ENCODE measurements at regions of chr19 and their contacts with region 1.

Region 1: GRCh38 chr19:14006243-14006765 is at the start of gene RFX1:
- DNase-seq: peak; percentile 100
- ATAC-seq: peak; percentile 84
- H3K4me3 Mint-ChIP-seq: peak within 1 kb of the TSS; percentile 94
- H3K27ac Mint-ChIP-seq: peak within 1 kb of the TSS; percentile 98
- H3K4me1 Mint-ChIP-seq: peaks cover 39% of the 10 kb centered on the region
- H3K27me3 Mint-ChIP-seq: no peaks in the 10 kb centered on the region
- total RNA-seq, gene RFX1: 14.2 to 15.3 TPM

Region 2: DNA sequence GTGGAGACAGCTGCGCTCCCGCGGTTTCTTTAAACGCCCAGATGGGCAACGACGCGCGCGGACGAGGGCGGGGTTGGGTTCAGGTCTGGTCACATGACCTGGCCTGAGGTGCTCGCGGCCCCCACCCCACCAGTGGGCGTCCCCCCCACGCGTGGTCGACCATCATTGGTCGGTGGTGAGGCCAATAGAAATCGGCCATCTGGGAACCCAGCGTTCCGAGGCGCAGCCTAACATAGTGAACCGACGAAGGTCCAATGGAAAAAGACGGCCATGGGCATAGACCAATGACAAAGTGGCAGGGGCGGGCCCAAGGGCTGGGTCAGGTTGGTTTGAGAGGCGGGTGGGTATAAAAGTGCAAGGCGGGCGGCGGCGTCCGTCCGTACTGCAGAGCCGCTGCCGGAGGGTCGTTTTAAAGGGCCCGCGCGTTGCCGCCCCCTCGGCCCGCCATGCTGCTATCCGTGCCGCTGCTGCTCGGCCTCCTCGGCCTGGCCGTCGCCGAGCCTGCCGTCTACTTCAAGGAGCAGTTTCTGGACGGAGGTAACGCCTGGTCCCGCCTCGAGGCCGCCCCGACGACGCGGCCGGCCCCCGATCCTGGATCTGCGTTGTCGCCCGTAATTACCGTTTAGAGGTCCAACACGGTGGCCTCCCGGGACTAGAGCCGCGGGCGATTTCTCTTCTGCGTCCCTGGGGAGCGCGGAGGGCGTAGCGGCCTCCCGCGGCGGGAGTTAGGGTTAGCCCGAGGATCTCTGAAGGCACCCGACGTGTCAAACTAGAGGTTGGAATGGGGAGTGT is 1067.9 kb before region 1 on chr19 and contains the start of gene CALR:
- CTCF ChIA-PET with region 1: no interaction called
- POLR2A ChIA-PET with region 1: interaction called, 8 read pairs
- intact Hi-C with region 1: loop called in 1 of 2 experiments (anchors 10 kb)
- DNase-seq: peak; percentile 99
- ATAC-seq: peak; percentile 89
- H3K4me3 Mint-ChIP-seq: peak within 1 kb of the TSS; percentile 99
- H3K27ac Mint-ChIP-seq: peak within 1 kb of the TSS; percentile 96
- H3K4me1 Mint-ChIP-seq: peaks cover 59% of the 10 kb centered on the region
- H3K27me3 Mint-ChIP-seq: no peaks in the 10 kb centered on the region
- total RNA-seq, gene CALR: 557 to 569 TPM

Region 3: GRCh38 chr19:13774217-13775191 is 231.8 kb before region 1 on chr19 and contains the start of gene C19orf53:
- CTCF ChIA-PET with region 1: no interaction called
- POLR2A ChIA-PET with region 1: no interaction called
- intact Hi-C with region 1: loop called in 1 of 2 experiments (anchors 1 kb)
- DNase-seq: peak; percentile 94
- ATAC-seq: peak; percentile 100
- H3K4me3 Mint-ChIP-seq: peak within 1 kb of the TSS; percentile 100
- H3K27ac Mint-ChIP-seq: peak within 1 kb of the TSS; percentile 95
- H3K4me1 Mint-ChIP-seq: peaks cover 17% of the 10 kb centered on the region
- H3K27me3 Mint-ChIP-seq: no peaks in the 10 kb centered on the region
- total RNA-seq, gene C19orf53: 115 to 142 TPM

Region 4: GRCh38 chr19:13905938-13906904 is 100.1 kb before region 1 on chr19 and contains the starts of genes BRME1 and CC2D1A:
- CTCF ChIA-PET with region 1: interaction called, 3 read pairs
- POLR2A ChIA-PET with region 1: no interaction called
- intact Hi-C with region 1: loop called in 1 of 2 experiments (anchors 1 kb)
- DNase-seq: peak; percentile 99
- ATAC-seq: peak; percentile 97
- H3K4me3 Mint-ChIP-seq: peak within 1 kb of the TSS; percentile 75
- H3K27ac Mint-ChIP-seq: peak within 1 kb of the TSS; percentile 93
- H3K4me1 Mint-ChIP-seq: peaks cover 14% of the 10 kb centered on the region
- H3K27me3 Mint-ChIP-seq: no peaks in the 10 kb centered on the region
- total RNA-seq, gene BRME1: 5.3 to 5.5 TPM
- total RNA-seq, gene CC2D1A: 30.2 to 34.3 TPM

Region 5: DNA sequence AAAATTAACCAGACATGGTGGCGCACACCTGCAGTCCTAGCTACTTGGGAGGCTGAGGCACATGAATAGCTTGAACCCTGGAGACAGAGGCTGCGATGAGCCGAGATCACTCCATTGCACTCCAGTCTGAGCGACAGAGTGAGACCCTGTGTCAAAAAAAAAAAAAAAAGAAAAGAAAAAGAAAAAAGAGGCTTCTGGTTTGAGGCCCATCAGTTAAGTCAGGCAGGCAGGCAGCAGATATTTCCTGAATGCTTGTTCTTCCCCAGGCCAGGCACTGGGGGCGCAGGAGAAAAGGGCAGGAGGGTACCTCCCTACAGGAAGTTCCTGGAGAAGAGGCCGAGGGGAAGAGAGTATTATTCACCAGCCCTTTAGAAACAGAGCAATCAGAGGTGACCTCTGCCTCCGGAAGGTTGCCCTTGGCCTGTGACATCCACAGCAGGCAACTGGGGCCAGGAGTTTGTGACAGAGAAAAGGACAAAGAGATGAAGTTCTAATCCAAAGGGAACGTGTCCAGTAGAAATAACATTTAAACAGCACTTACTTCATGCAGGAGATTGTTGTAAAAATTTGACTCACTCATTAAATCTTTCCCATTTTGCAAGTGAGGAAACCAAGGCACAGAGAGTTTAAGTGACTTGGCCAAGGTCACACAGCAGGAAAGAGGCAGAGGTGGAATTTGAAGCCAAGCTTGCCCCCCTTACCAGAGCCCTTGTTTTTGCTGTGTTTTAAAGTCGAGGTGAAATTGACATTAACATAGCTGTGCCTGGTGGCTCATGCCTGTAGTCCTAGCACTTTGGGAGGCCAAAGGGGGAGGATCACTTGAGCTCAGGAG is 17.3 kb after region 1 on chr19:
- CTCF ChIA-PET with region 1: interaction called, 3 read pairs
- POLR2A ChIA-PET with region 1: interaction called, 10 read pairs
- intact Hi-C with region 1: no loop called
- DNase-seq: peak; percentile 53
- ATAC-seq: peak; percentile 35
- H3K4me3 Mint-ChIP-seq: no peak overlapping the region
- H3K27ac Mint-ChIP-seq: peak overlapping the region; percentile 29
- H3K4me1 Mint-ChIP-seq: peaks cover 10% of the 10 kb centered on the region
- H3K27me3 Mint-ChIP-seq: no peaks in the 10 kb centered on the region

Region 6: DNA sequence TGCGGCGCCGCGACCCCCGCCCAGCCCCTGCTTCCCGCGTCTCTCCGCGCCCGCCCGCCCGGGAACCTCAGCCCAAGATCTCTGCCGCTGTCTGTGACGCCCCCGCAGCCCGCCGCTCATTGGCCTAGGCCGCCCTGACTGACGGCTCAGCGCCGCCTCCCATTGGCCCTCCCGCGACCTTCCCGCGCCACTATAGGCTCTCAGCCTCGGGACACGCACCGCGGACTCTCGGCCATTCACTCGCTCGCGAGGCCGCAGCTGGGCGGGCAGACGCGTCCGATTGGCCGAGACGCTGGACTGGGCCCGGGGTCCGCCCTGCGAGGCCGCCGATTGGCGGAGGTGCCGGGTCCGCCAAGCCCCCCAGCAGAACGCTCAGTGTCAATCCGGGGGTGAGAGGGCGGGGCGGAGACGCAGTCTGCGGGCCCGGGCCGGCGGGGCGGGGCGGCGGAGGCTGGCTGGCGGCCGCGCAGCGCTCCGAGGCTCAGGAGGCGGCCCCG is 111.4 kb after region 1 on chr19 and contains the start of gene PRKACA:
- CTCF ChIA-PET with region 1: no interaction called
- POLR2A ChIA-PET with region 1: no interaction called
- intact Hi-C with region 1: loop called in 1 of 2 experiments (anchors 1 kb)
- DNase-seq: peak; percentile 99
- ATAC-seq: peak; percentile 98
- H3K4me3 Mint-ChIP-seq: peak within 1 kb of the TSS; percentile 78
- H3K27ac Mint-ChIP-seq: peak within 1 kb of the TSS; percentile 77
- H3K4me1 Mint-ChIP-seq: peaks cover 41% of the 10 kb centered on the region
- H3K27me3 Mint-ChIP-seq: no peaks in the 10 kb centered on the region
- total RNA-seq, gene PRKACA: 58.1 to 68.7 TPM

Region 7: DNA sequence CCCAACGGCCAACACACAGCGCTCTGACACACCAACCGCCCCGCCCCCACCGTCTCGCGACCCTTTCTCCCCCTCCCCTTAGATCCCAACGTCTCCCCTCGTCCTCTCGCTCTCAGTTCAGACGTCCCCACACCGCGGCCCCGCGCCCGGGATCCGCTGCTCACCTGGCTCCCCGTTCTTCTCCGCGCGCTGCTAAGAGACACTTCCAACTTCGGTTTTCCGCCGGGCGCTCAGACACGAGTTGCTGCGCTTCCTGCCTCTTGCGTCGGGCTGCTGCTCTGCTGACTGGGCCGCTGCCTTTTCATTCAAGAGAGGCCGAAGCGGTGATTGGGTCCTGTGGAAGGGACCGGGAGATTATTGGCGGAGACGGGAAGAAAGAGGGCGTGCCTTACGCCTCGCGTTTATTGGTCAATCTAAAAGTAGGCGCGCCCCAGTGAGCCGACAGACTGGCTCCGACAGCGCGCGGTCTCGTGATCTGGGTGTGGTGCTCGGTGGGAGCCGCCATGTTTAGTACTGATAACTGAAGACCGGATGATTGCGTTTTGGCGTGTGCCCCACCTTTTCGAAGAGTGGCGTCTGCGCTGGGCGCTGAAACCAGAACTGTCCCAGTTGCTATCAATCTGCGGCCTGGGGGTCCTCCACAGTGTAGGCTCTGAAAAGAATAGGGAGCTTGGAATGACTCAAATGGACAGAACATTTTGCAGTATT is 413.0 kb after region 1 on chr19 and contains the start of gene DDX39A:
- CTCF ChIA-PET with region 1: no interaction called
- POLR2A ChIA-PET with region 1: no interaction called
- intact Hi-C with region 1: loop called in 1 of 2 experiments (anchors 1 kb)
- DNase-seq: peak; percentile 99
- ATAC-seq: peak; percentile 95
- H3K4me3 Mint-ChIP-seq: peak within 1 kb of the TSS; percentile 82
- H3K27ac Mint-ChIP-seq: peak within 1 kb of the TSS; percentile 92
- H3K4me1 Mint-ChIP-seq: peaks cover 29% of the 10 kb centered on the region
- H3K27me3 Mint-ChIP-seq: no peaks in the 10 kb centered on the region
- total RNA-seq, gene DDX39A: 168 to 185 TPM